ENCODE measurements at regions of chr17 and their contacts with region 1.

Region 1: DNA sequence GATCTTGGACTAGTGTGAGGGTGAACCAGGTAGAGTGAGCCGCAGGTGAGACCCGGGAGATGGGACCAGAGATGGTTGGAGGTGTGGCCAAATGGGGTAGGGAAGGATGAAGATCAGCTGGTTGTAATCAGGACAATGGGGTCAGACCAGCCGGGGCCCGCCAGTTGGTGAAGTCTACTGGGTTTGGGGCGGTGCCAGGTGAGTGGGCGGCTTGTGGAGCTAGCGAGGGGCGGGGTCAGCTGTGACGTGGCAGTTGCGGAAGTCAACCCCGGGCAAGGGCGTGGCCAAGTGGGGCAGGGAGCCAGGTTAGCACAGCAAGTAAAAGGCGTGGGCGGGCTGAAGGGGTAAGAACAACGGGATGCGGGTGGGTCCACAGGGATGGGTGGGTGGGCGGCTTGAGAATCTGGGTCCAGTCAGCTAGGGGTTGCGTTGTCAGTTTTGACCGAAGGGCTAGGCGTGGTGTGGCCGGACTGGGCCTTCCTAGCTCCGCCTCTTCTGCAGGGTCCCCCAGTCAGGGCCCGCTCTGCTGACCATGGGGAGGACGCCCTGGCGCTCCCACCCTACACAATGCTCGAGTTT is 25.5 kb upstream of the ALKBH5 start:
- DNase-seq: peak; percentile 95
- ATAC-seq: peak; percentile 77
- H3K4me3 Mint-ChIP-seq: peak overlapping the region; percentile 84
- H3K27ac Mint-ChIP-seq: peak overlapping the region; percentile 93
- H3K4me1 Mint-ChIP-seq: peaks cover 18% of the 10 kb centered on the region
- H3K27me3 Mint-ChIP-seq: no peaks in the 10 kb centered on the region

Region 2: GRCh38 chr17:18183334-18184142 is 25.4 kb after region 1 on chr17 and contains the start of gene ALKBH5:
- POLR2A ChIA-PET with region 1: interaction called, 14 read pairs
- DNase-seq: peak; percentile 99
- ATAC-seq: peak; percentile 90
- H3K4me3 Mint-ChIP-seq: peak within 1 kb of the TSS; percentile 91
- H3K27ac Mint-ChIP-seq: peak within 1 kb of the TSS; percentile 98
- H3K4me1 Mint-ChIP-seq: peaks cover 39% of the 10 kb centered on the region
- H3K27me3 Mint-ChIP-seq: no peaks in the 10 kb centered on the region
- total RNA-seq, gene ALKBH5: 133 to 134 TPM

Region 3: DNA sequence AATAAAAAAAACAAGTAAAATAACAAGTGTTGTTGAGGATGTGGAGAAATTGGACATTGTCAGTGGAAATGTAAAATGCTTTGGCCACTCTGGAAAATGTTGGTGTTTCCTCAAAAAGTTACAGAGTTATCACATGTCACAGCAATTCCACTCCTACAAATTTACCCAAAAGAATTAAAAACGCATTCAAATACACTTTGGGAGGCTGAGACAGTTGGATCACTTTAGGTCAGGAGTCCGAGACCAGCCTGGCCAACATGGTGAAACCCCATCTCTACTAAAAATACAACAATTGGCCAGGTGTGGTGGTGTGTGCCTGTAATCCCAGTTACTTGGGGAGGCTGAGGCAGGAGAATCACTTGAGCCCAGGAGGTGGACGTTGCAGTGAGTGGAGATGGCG is 151.1 kb after region 1 on chr17:
- POLR2A ChIA-PET with region 1: interaction called, 11 read pairs
- DNase-seq: no peak
- ATAC-seq: no peak
- H3K4me3 Mint-ChIP-seq: no peak overlapping the region
- H3K27ac Mint-ChIP-seq: no peak overlapping the region
- H3K4me1 Mint-ChIP-seq: peaks cover 29% of the 10 kb centered on the region
- H3K27me3 Mint-ChIP-seq: no peaks in the 10 kb centered on the region

Measured in activated naive CD8-positive, alpha-beta T cell treated with anti-CD3 and anti-CD28 coated beads, Interleukin-2, amount 10 ng/mL, durations not matched to agents 7 days and 5 days (primary cell).